Endothelial cell of umbilical vein (primary cell): ENCODE measurements at regions of chr3 and their contacts with region 1.

Region 1: DNA sequence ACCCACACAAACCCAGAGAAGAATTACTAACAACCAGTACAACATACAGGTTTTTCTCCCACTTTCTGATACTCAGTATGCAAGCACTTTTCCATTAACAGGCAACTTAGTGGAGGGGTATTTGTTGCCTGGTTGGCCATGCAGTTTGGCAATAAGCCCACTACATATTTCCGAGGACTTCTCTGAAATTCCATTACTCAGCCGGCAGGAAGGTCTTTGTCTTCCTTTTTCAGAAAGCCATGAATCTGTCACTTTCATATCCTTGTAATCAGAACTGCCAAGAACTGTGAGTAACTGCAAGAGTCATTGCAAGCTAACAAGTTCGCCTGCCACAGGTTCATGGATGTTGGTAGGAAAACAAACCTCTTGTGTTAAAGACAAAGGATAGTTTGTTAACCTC is 422.3 kb upstream of the ROBO1 start:
- DNase-seq: peak; percentile 99
- H3K4me3 ChIP-seq: peak overlapping the region in 1 of 3 experiments; percentile 30
- H3K27ac ChIP-seq: peak overlapping the region; percentile 94
- H3K4me1 ChIP-seq: peaks cover 46% of the 10 kb centered on the region
- H3K27me3 ChIP-seq: no peaks in the 10 kb centered on the region
- CTCF ChIP-seq: no peak
- POLR2A ChIP-seq: peak; percentile 36

Region 2: GRCh38 chr3:79521238-79521848 is 668.7 kb before region 1 on chr3:
- CTCF ChIA-PET with region 1: interaction called, 3 read pairs
- POLR2A ChIA-PET with region 1: no interaction called
- dilution Hi-C with region 1: no loop called
- intact Hi-C with region 1: loop called (anchors 5 kb)
- DNase-seq: peak; percentile 79
- H3K4me3 ChIP-seq: no peak overlapping the region
- H3K27ac ChIP-seq: no peak overlapping the region
- H3K4me1 ChIP-seq: peaks cover 6% of the 10 kb centered on the region
- H3K27me3 ChIP-seq: no peaks in the 10 kb centered on the region
- CTCF ChIP-seq: peak; percentile 17 to 30
- POLR2A ChIP-seq: no peak

Region 3: GRCh38 chr3:79872504-79873159 is 317.4 kb before region 1 on chr3:
- CTCF ChIA-PET with region 1: no interaction called
- POLR2A ChIA-PET with region 1: no interaction called
- dilution Hi-C with region 1: no loop called
- intact Hi-C with region 1: loop called (anchors 1 kb)
- DNase-seq: peak; percentile 96
- H3K4me3 ChIP-seq: no peak overlapping the region
- H3K27ac ChIP-seq: peak overlapping the region; percentile 80
- H3K4me1 ChIP-seq: peaks cover 24% of the 10 kb centered on the region
- H3K27me3 ChIP-seq: no peaks in the 10 kb centered on the region
- CTCF ChIP-seq: no peak
- POLR2A ChIP-seq: peak; percentile 48

Region 4: DNA sequence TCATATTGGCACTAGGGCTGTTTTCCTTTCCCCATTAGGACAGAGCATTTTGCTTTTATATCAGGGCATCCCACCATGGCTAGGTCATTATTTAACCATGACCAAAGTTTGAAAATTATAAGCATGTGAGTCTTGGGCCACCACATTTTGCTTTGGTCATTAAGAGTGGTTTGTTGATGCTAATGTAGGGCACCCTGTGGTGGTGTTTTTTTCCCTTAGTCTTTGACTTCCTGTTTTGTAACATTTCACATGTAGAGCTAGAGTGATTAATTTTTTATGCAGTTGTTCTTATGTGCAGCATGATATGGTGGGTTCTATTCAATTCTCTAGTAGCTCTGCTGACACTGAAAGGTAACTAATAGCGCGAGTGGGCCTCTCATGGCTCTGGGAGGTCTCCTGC is 172.7 kb before region 1 on chr3:
- CTCF ChIA-PET with region 1: no interaction called
- POLR2A ChIA-PET with region 1: no interaction called
- dilution Hi-C with region 1: no loop called
- intact Hi-C with region 1: loop called (anchors 2 kb)
- DNase-seq: peak; percentile 42
- H3K4me3 ChIP-seq: no peak overlapping the region
- H3K27ac ChIP-seq: no peak overlapping the region
- H3K4me1 ChIP-seq: peaks cover 21% of the 10 kb centered on the region
- H3K27me3 ChIP-seq: no peaks in the 10 kb centered on the region
- CTCF ChIP-seq: no peak
- POLR2A ChIP-seq: no peak

Region 5: GRCh38 chr3:80677796-80678195 is 487.7 kb after region 1 on chr3:
- CTCF ChIA-PET with region 1: interaction called, 5 read pairs
- POLR2A ChIA-PET with region 1: no interaction called
- dilution Hi-C with region 1: no loop called
- intact Hi-C with region 1: loop called (anchors 10 kb)
- DNase-seq: peak; percentile 62
- H3K4me3 ChIP-seq: no peak overlapping the region
- H3K27ac ChIP-seq: no peak overlapping the region
- H3K4me1 ChIP-seq: no peaks in the 10 kb centered on the region
- H3K27me3 ChIP-seq: no peaks in the 10 kb centered on the region
- CTCF ChIP-seq: no peak
- POLR2A ChIP-seq: no peak

Region 6: DNA sequence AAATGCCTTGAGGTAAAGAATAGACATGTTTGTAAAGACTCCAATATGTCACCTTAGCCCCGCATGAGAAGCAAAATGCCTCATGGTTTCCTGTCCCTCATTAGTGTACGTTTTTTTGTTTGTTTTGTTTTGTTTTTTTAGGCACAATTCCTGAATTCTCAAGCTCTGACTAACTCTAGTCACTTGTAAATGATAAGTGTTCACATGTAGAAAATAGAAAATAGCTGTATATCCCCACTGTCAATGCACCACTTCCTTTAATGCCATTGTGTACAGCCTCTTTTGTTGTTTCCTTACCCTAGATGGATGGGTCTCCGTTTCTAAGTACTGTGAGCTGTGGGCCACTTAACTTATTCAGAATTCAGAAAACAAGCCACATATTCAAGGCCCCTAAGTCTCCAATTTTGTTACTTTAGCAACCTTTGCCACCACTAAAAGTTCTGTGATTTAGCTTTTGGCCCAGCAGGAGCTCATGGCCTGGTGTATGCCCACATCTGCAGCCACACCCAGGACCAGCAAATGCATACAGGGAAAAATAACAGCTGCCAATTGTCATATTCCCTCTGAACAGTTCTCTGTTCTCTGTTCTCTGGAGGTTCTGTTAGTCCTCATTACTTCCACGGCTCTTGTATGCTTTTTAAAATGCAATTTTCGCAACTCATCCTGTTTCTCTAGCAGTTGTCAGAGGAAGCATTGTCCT is 915.9 kb after region 1 on chr3:
- CTCF ChIA-PET with region 1: no interaction called
- POLR2A ChIA-PET with region 1: no interaction called
- dilution Hi-C with region 1: no loop called
- intact Hi-C with region 1: loop called (anchors 5 kb)
- DNase-seq: peak; percentile 94
- H3K4me3 ChIP-seq: no peak overlapping the region
- H3K27ac ChIP-seq: peak overlapping the region; percentile 93
- H3K4me1 ChIP-seq: peaks cover 20% of the 10 kb centered on the region
- H3K27me3 ChIP-seq: no peaks in the 10 kb centered on the region
- CTCF ChIP-seq: no peak
- POLR2A ChIP-seq: no peak